Dendritic cell treated with granulocyte-macrophage colony-stimulating factor and Interleukin-4, amounts not matched to agents 40 ng/mL and 50 ng/mL, for 4 days (primary cell): ENCODE measurements at regions of chr6 and their contacts with region 1.

Region 1: DNA sequence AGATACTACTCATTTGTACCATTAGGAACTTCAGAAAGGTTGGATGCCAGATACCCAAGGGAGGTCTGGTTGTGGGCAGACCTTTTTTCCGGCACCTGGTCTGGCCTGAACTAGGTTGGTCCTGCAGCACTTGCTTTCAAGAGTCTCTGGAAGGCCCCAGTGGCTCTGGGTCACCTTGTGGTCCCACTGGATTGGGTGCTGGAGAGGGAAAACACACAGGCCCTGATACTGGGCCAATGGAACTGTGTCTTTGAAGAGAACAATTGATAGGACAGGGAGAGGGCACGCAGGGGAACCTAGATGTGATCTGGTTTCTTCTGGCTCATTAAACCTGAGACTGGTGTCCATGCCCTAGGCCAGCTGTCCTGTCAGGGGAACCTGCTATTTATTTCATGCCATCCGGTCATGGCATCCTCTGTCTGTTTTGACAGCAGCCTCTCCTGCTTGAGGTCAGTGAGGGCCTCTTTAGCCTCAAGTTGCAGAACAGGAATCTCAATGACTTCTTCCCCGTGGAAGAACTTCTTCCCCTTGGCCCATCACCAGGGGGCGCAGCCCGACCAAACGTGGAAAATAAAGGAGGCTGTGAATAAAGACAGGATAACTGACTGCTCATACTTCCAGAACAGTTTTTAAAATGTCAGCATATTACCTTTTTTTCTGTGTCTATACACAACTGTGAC is 25.0 kb downstream of the TAF8 start:
- H3K4me3 Mint-ChIP-seq: no peak overlapping the region
- H3K27ac Mint-ChIP-seq: no peak overlapping the region
- H3K4me1 Mint-ChIP-seq: no peaks in the 10 kb centered on the region
- H3K27me3 Mint-ChIP-seq: no peaks in the 10 kb centered on the region

Region 2: DNA sequence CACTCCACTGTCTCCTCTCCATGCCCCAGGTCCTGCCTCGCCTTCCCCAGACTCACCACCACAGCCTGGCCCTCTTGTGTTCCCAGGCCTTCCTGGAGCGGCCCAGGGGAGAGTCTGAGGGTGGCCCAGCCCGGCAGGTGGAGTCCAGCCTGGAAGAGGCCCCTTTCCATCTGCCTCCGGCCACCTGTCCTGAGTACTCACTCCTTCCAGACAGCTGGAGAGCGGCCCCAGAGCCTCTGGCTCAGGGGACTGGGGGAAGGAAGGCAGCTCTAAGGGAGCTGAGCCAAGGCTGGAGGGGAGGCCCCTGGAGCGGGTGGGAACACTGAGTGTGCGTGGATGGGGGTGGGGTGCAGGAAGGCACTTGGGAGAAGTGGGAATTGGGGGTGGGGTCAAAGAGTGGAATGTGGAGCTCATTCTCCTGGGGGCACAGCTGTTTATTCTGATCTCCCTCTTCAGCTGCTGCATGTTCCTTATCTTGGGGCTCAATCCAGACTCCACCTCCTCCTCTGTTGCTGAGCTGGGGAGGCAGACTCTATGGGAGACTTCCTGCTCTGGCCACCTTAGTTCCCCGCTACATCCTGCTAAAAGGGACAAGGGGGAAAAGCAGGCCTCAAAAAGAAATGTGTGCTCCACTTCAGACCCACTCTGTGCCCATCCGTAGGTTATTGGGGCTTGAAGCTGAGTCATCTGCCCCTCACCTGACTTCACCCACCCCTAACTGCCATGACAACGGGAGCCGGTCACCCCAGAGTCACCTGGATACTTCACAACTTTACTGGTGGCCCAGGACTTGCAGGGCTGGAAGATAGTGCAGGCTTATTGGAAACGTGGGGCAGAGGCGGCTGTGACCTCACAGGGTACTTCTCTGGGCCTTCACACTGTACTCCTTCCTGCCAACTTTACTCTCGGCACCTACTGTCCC is 44.5 kb before region 1 on chr6:
- intact Hi-C with region 1: no loop called
- H3K4me3 Mint-ChIP-seq: no peak overlapping the region
- H3K27ac Mint-ChIP-seq: peak overlapping the region; percentile 83
- H3K4me1 Mint-ChIP-seq: peaks cover 61% of the 10 kb centered on the region
- H3K27me3 Mint-ChIP-seq: no peaks in the 10 kb centered on the region

Region 3: DNA sequence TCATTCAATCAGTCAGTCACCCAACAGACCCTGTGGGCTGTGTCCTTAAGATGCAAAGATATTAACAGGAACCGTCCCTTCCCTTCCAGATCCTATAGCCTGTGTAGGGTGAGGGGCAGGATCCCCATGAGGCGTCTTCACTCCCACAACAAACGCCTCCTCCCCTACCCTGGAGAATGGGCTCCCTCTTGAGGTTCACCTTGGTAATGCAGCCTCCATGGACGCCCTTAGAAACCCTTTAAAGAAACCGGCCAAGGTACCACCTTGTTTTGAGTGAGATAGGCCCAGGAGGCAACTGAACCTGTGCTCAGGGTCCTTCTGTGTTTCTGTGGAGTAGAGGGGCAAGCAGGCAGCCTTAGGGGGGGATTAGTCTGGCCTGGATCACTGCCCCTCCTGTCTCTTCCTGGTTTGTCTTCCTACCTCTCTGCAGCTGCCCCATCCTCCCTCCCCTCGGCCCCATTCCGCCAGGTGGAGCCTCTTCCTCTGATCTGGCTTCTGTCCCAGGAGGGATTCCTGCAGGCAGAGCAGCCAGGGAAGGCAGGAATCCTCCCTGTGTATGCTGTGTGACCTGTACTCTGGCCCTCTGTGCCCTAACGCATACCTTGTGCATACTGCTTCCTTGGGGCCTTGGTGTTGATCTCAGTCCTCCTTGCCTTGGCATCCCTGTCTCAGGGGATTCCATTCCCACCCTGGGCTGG is 91.3 kb after region 1 on chr6:
- intact Hi-C with region 1: loop called (anchors 1 kb)
- H3K4me3 Mint-ChIP-seq: no peak overlapping the region
- H3K27ac Mint-ChIP-seq: no peak overlapping the region
- H3K4me1 Mint-ChIP-seq: peaks cover 9% of the 10 kb centered on the region
- H3K27me3 Mint-ChIP-seq: peaks cover 12% of the 10 kb centered on the region

Region 4: GRCh38 chr6:42294759-42295158 is 219.5 kb after region 1 on chr6:
- intact Hi-C with region 1: no loop called
- H3K4me3 Mint-ChIP-seq: no peak overlapping the region
- H3K27ac Mint-ChIP-seq: no peak overlapping the region
- H3K4me1 Mint-ChIP-seq: peaks cover 56% of the 10 kb centered on the region
- H3K27me3 Mint-ChIP-seq: no peaks in the 10 kb centered on the region